ENCODE measurements at regions of chr14 and their contacts with region 1.

Region 1: GRCh38 chr14:70622111-70622712 is 19.5 kb upstream of the TTC9 start:
- DNase-seq: peak in 29 of 35 experiments; percentile 6 to 75 (median 42)
- ATAC-seq: peak; percentile 77 to 81 (median 79)
- H3K4me3 ChIP-seq: no peak overlapping the region
- H3K4me3 Mint-ChIP-seq: no peak overlapping the region
- H3K27ac ChIP-seq: no peak overlapping the region
- H3K27ac Mint-ChIP-seq: no peak overlapping the region
- H3K4me1 ChIP-seq: no peaks in the 10 kb centered on the region
- H3K4me1 Mint-ChIP-seq: peaks cover 0 to 8% (median 2%) of the 10 kb centered on the region in 3 donors
- H3K27me3 ChIP-seq: no peaks in the 10 kb centered on the region
- H3K27me3 Mint-ChIP-seq: peaks cover 0 to 6% of the 10 kb centered on the region in 2 donors

Region 2: GRCh38 chr14:70600382-70601157 is 21.6 kb before region 1 on chr14 and contains the start of gene MED6:
- CTCF ChIA-PET with region 1: interaction called in 1 of 2 experiments, 5 read pairs
- POLR2A ChIA-PET with region 1: interaction called in 1 of 2 experiments, 10 read pairs
- DNase-seq: peak; percentile 75 to 95 (median 91)
- ATAC-seq: peak; percentile 99 to 100 (median 99)
- H3K4me3 ChIP-seq: peak within 1 kb of the TSS; percentile 86 to 91
- H3K4me3 Mint-ChIP-seq: peak within 1 kb of the TSS; percentile 99 to 100 (median 99)
- H3K27ac ChIP-seq: peak within 1 kb of the TSS; percentile 88
- H3K27ac Mint-ChIP-seq: peak within 1 kb of the TSS; percentile 97 to 98
- H3K4me1 ChIP-seq: peaks cover 14 to 15% of the 10 kb centered on the region in 2 experiments
- H3K4me1 Mint-ChIP-seq: peaks cover 29 to 42% (median 31%) of the 10 kb centered on the region in 3 donors
- H3K27me3 ChIP-seq: peaks cover 3 to 5% of the 10 kb centered on the region in 2 experiments
- H3K27me3 Mint-ChIP-seq: peaks cover 0 to 4% of the 10 kb centered on the region in 2 donors
- total RNA-seq, gene MED6: 45.1 to 96.4 (median 53.3) TPM

Region 3: GRCh38 chr14:70640938-70641547 is 18.8 kb after region 1 on chr14:
- CTCF ChIA-PET with region 1: interaction called in 1 of 2 experiments, 5 read pairs
- POLR2A ChIA-PET with region 1: interaction called in 1 of 2 experiments, 13 read pairs
- DNase-seq: peak in 32 of 35 experiments; percentile 16 to 70 (median 48)
- ATAC-seq: peak; percentile 67 to 74 (median 68)
- H3K4me3 ChIP-seq: peak overlapping the region; percentile 48 to 71
- H3K4me3 Mint-ChIP-seq: peak overlapping the region; percentile 95 to 98 (median 95)
- H3K27ac ChIP-seq: peak overlapping the region; percentile 35
- H3K27ac Mint-ChIP-seq: peak overlapping the region; percentile 91 to 95
- H3K4me1 ChIP-seq: peaks cover 28 to 36% of the 10 kb centered on the region in 2 experiments
- H3K4me1 Mint-ChIP-seq: peaks cover 48 to 62% (median 57%) of the 10 kb centered on the region in 3 donors
- H3K27me3 ChIP-seq: peaks cover 0 to 4% of the 10 kb centered on the region in 2 experiments
- H3K27me3 Mint-ChIP-seq: peaks cover 0 to 3% of the 10 kb centered on the region in 2 donors

Region 4: GRCh38 chr14:70714055-70714621 is 91.9 kb after region 1 on chr14:
- CTCF ChIA-PET with region 1: interaction called, 5 to 24 read pairs
- POLR2A ChIA-PET with region 1: no interaction called
- DNase-seq: peak in 28 of 35 experiments; percentile 8 to 85 (median 28)
- ATAC-seq: no peak
- H3K4me3 ChIP-seq: no peak overlapping the region
- H3K4me3 Mint-ChIP-seq: no peak overlapping the region
- H3K27ac ChIP-seq: no peak overlapping the region
- H3K27ac Mint-ChIP-seq: no peak overlapping the region
- H3K4me1 ChIP-seq: peaks cover 0 to 3% of the 10 kb centered on the region in 2 experiments
- H3K4me1 Mint-ChIP-seq: peaks cover 2 to 7% (median 3%) of the 10 kb centered on the region in 3 donors
- H3K27me3 ChIP-seq: peaks cover 0 to 4% of the 10 kb centered on the region in 2 experiments
- H3K27me3 Mint-ChIP-seq: peaks cover 3 to 5% of the 10 kb centered on the region in 2 donors

Region 5: GRCh38 chr14:70726651-70727375 is 104.6 kb after region 1 on chr14:
- CTCF ChIA-PET with region 1: interaction called in 1 of 2 experiments, 15 read pairs
- POLR2A ChIA-PET with region 1: no interaction called
- DNase-seq: no peak
- ATAC-seq: no peak
- H3K4me3 ChIP-seq: no peak overlapping the region
- H3K4me3 Mint-ChIP-seq: no peak overlapping the region
- H3K27ac ChIP-seq: no peak overlapping the region
- H3K27ac Mint-ChIP-seq: no peak overlapping the region
- H3K4me1 ChIP-seq: no peaks in the 10 kb centered on the region
- H3K4me1 Mint-ChIP-seq: no peaks in the 10 kb centered on the region
- H3K27me3 ChIP-seq: no peaks in the 10 kb centered on the region
- H3K27me3 Mint-ChIP-seq: no peaks in the 10 kb centered on the region

Region 6: DNA sequence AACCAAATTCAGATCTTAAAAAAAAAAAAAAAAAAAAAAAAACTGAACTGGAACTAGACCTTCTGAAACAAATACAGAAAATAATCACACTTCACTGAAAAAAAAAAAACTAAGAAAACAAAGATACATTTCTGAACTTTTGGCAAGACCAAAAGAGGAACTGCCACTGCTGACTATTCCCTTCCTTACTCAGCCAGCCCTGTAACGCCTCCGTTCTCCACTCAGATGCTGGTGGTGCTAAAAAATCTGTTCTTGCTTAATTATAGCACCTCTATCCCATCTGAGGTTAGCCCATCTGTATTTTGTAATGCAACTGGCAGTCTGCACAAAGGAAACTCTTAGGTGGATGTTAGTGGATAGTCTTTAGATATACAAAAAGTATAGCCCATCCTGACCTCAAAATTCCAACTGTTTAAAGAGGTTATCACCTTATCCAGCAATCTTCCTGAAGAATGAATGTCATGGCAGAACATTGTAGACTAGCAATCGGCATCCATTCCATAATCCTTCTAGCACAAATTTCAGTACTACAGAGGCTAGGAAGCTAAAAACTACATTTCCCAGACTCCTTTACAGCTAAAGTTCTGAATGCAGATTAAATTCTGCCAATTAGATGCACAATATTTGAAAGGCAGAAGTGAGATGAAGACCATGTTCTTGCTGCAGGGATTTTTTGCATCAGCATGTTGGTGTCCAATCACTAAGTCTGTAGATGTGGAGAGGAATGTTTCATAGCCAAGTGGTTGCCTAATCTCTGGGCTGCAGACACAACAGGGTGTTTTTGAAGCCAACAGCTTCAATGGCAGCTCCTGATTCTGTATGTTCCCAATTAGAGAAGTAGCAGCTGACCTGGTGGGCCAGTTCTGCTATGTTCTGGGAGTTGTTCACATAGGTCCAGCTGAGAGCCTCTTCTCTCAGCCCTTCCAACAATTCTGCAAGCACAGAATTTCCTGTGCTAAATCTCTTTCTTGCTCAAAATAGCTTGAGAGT is 181.4 kb after region 1 on chr14:
- CTCF ChIA-PET with region 1: no interaction called
- POLR2A ChIA-PET with region 1: no interaction called
- DNase-seq: no peak
- ATAC-seq: no peak
- H3K4me3 ChIP-seq: no peak overlapping the region
- H3K4me3 Mint-ChIP-seq: no peak overlapping the region
- H3K27ac ChIP-seq: no peak overlapping the region
- H3K27ac Mint-ChIP-seq: no peak overlapping the region
- H3K4me1 ChIP-seq: peaks cover 3 to 9% of the 10 kb centered on the region in 2 experiments
- H3K4me1 Mint-ChIP-seq: peaks cover 9 to 14% (median 10%) of the 10 kb centered on the region in 3 donors
- H3K27me3 ChIP-seq: peaks cover 0 to 3% of the 10 kb centered on the region in 2 experiments
- H3K27me3 Mint-ChIP-seq: peaks cover 0 to 5% of the 10 kb centered on the region in 2 donors